HEK293 (cell line): ENCODE measurements at regions of chr17 and their contacts with region 1.

Region 1: GRCh38 chr17:40168262-40168832 is 8.9 kb upstream of the RAPGEFL1 start:
- H3K4me3 ChIP-seq: no peak overlapping the region
- H3K27ac ChIP-seq: peak overlapping the region; percentile 37; the same call in 1 of the 2 replicates
- H3K4me1 ChIP-seq: no peaks in the 10 kb centered on the region
- CTCF ChIP-seq: peak; percentile 52

Region 2: GRCh38 chr17:40026816-40027613 is 141.3 kb before region 1 on chr17:
- CTCF ChIA-PET with region 1: interaction called, 18 read pairs
- POLR2A ChIA-PET with region 1: no interaction called
- H3K4me3 ChIP-seq: no peak overlapping the region
- H3K27ac ChIP-seq: no peak overlapping the region
- H3K4me1 ChIP-seq: peaks cover 16% of the 10 kb centered on the region
- CTCF ChIP-seq: peak; percentile 82

Region 3: DNA sequence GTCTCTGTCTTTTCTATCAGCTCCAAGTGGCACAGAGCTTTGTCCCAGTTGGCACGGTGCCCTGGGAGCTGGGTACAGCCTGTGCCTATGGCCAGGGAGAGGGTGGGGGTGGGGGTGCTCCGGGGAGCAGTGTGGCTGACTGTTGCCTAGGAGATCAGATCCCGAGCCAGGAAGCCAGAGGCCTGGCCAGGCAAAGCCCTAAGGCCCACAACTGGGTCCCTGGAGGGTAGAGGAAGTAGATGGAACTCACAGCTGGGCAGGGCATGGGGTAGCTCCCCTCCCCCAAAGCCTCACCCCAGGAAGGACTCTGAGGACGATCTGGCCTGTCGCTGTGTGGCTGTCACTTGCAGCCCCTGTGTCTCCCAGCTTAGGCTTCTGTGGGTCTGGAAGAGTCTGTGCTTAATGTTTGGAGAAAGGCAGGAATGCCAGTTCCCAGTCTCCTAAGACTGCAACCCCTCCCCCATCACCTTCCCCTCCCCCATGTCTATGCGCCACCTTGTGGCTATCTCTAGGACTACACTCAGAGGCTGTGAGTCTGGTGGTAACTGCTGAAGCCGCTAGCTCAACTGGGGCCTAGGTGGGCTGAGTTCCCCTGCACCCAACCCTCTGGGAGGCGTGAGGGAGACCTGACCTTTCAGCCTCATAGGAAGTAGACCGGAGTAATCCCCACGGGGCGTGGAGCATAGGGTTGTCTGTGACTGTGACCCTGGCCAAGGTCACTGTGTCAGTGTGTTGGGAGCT is 93.0 kb before region 1 on chr17:
- CTCF ChIA-PET with region 1: interaction called, 19 read pairs
- POLR2A ChIA-PET with region 1: no interaction called
- H3K4me3 ChIP-seq: no peak overlapping the region
- H3K27ac ChIP-seq: no peak overlapping the region
- H3K4me1 ChIP-seq: peaks cover 22% of the 10 kb centered on the region
- CTCF ChIP-seq: peak; percentile 80

Region 4: DNA sequence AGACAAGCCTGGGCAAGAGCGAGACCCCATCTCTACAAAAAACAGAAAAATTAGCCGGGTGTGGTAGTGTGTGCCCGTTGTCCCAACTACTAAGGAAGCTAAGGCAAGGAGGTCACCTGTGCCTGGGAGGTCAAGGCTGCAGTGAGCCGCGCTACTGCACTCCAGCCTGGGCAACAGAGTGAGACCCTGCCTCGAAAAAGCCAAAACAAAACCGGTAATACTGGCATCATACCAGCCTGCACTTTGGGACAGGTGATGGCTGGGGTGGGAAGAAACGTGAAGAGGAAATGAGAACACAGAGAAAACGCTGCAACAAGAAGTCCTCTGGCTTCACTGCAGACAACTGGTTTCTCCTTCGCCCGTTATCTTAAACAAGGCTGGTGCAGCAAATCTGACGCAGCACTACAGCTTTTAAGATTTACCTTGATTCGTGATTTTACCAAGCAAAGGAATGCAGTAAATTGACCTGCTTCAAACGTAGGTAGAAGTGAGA is 28.7 kb before region 1 on chr17:
- CTCF ChIA-PET with region 1: interaction called, 9 read pairs
- POLR2A ChIA-PET with region 1: interaction called, 13 read pairs
- H3K4me3 ChIP-seq: peak overlapping the region; percentile 37
- H3K27ac ChIP-seq: peak overlapping the region; percentile 85
- H3K4me1 ChIP-seq: peaks cover 8% of the 10 kb centered on the region
- CTCF ChIP-seq: no peak

Region 5: GRCh38 chr17:40157973-40158372 is 10.4 kb before region 1 on chr17:
- CTCF ChIA-PET with region 1: interaction called, 61 read pairs
- POLR2A ChIA-PET with region 1: interaction called, 5 read pairs
- H3K4me3 ChIP-seq: no peak overlapping the region
- H3K27ac ChIP-seq: no peak overlapping the region
- H3K4me1 ChIP-seq: no peaks in the 10 kb centered on the region
- CTCF ChIP-seq: no peak

Region 6: GRCh38 chr17:40287494-40288369 is 119.4 kb after region 1 on chr17 and contains the start of gene CDC6:
- CTCF ChIA-PET with region 1: interaction called, 14 read pairs
- POLR2A ChIA-PET with region 1: interaction called, 3 read pairs
- H3K4me3 ChIP-seq: peak within 1 kb of the TSS; percentile 96
- H3K27ac ChIP-seq: peak within 1 kb of the TSS; percentile 95
- H3K4me1 ChIP-seq: peaks cover 3% of the 10 kb centered on the region
- CTCF ChIP-seq: 0 out of 2 replicates have a peak, but pooled peaks have one; percentile 9

Region 7: GRCh38 chr17:40450175-40450574 is 281.8 kb after region 1 on chr17:
- CTCF ChIA-PET with region 1: no interaction called
- POLR2A ChIA-PET with region 1: no interaction called
- H3K4me3 ChIP-seq: no peak overlapping the region
- H3K27ac ChIP-seq: no peak overlapping the region
- H3K4me1 ChIP-seq: no peaks in the 10 kb centered on the region
- CTCF ChIP-seq: peak; percentile 60